Activated naive CD4-positive, alpha-beta T cell treated with anti-CD3 and anti-CD28 coated beads for 36 hours (primary cell): ENCODE measurements at regions of chr10 and their contacts with region 1.

Region 1: DNA sequence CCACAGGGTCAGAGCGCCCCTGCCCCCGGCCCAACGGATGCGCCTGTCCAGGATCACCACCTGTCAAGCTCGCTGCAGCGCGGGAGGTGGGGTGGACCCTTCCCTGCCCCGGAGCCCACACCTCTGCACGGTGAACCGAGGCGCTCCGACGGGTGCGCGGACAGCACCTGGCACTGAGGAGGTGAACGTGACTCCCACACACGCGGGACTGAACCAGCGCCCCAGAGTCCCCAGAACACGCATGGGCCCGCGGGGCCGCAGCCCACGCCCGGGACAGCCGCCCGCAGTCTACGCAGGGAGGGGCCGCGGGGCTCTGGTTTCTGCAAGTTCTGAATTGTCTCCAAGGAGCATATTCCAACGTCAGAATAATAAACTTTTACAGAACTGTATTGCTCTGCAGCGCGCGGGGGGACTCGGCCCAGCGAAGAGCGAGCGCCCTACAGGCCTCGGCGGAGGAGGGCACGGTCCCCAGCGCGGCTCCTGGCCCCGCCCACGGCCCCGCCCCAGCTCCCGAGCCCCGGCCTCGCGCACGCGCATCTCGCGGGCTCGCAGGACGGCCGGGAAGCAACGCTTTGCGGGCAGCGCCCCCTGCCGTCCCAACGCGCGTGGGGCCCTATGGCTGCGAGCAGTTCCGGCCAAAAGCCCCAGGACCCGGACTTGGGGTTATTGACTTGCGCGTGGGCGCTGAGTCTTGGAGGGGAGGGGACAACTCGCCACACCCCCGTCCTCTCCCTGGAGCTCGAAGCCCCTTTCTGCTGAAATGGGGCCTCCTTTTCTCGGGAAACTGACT is 29.7 kb downstream of the OAT start:
- DNase-seq: peak; percentile 90
- H3K4me3 Mint-ChIP-seq: no peak overlapping the region
- H3K27ac Mint-ChIP-seq: no peak overlapping the region
- H3K4me1 Mint-ChIP-seq: no peaks in the 10 kb centered on the region
- H3K27me3 Mint-ChIP-seq: no peaks in the 10 kb centered on the region

Region 2: DNA sequence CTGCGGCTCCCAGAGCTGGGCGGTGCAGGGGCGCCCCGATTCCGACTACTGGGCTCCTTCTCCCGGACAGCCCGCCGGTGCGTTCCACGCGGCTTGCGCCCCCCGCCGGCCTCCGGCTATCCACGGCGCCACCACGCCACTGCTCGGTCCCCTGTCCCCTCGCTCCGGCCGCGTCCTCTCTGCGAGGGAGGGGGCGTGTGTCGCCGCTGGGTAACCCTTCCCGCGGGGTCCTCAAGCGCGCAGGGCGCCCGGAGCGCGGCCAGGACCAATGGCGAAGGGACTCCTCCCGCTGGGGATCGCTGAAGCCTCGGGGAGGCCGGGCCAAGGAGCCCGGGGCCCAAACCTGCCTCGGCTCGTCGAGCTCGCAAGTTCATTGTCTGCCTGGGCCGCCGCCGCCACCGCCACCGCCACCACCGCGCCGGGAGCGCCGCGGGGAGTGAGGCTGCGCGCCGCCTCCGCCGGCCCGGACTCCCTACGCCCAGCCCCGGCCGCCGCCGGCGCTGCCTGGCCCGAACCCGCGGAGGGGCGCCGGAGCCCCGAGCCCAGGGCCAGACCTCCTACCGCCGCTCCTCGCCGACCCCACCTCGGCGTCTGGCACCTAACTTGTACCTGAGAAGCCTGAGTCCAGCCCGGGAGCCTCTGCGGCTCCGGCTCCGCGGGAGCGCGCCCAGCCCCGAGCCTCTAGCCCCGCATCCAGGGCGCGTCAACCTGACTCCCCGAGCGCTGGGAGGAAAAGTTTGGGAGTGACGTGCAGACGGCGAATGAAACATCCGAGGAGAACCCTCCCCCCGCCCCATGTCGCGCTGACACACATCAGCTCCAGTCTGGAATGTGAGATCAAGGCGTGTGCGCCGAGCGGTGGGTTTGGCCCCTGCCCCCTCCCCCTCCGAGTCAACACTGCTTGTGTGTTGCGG is 295.9 kb before region 1 on chr10 and contains the start of gene CHST15:
- CTCF ChIA-PET with region 1: interaction called, 4 read pairs
- intact Hi-C with region 1: loop called (anchors 5 kb)
- DNase-seq: peak; percentile 12
- H3K4me3 Mint-ChIP-seq: peak within 1 kb of the TSS; percentile 58
- H3K27ac Mint-ChIP-seq: no peak within 1 kb of the TSS
- H3K4me1 Mint-ChIP-seq: peaks cover 2% of the 10 kb centered on the region
- H3K27me3 Mint-ChIP-seq: peaks cover 55% of the 10 kb centered on the region
- total RNA-seq, gene CHST15: 0.47 to 0.50 TPM

Region 3: GRCh38 chr10:124259139-124259825 is 129.7 kb before region 1 on chr10:
- CTCF ChIA-PET with region 1: interaction called, 7 read pairs
- intact Hi-C with region 1: loop called (anchors 1 kb)
- DNase-seq: peak; percentile 33
- H3K4me3 Mint-ChIP-seq: no peak overlapping the region
- H3K27ac Mint-ChIP-seq: no peak overlapping the region
- H3K4me1 Mint-ChIP-seq: no peaks in the 10 kb centered on the region
- H3K27me3 Mint-ChIP-seq: no peaks in the 10 kb centered on the region

Region 4: DNA sequence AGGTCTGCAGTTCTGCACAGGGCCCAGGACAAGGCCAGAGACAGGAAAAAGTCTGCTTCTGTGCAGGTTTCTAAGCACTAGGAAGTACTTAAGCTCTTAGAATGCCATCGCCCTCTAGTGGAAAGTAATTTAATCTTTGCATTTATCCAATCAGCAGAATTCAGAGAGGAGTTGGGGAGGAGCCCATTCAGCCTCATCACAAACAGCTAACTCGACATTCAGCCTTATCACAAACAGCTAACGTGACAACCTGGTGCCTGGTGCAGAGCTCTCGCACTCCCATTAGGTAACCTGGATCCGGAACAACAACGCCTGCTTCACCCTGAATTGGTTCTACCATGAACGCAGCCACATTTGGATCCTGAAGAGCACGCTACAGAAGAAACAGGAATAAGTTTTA is 14.5 kb after region 1 on chr10:
- CTCF ChIA-PET with region 1: interaction called, 16 read pairs
- intact Hi-C with region 1: loop called (anchors 1 kb)
- DNase-seq: peak; percentile 33
- H3K4me3 Mint-ChIP-seq: no peak overlapping the region
- H3K27ac Mint-ChIP-seq: no peak overlapping the region
- H3K4me1 Mint-ChIP-seq: peaks cover 5% of the 10 kb centered on the region
- H3K27me3 Mint-ChIP-seq: no peaks in the 10 kb centered on the region